Caco-2 (cell line): ENCODE measurements at regions of chr3 and their contacts with region 1.

Region 1: DNA sequence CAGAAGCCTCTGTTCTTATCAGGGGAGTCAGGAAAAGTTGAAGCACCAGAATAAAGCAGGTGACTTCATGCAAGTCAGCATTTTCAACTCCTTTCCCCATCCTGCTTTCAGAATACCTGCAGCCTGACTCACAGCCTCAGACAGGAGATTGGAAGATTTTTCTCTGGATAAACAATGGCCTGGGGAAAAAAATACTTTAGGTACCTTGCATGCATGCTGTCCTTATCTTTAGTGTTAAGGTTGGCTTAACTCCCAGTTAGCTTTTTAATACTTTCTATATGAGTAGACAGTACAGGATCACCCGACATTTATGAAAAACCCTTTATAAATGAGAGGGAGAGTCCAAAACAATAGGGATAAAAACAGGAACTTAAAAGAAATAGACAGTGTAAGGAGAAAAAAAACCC is 53.6 kb downstream of the PAK2 start:
- DNase-seq: peak; percentile 78 to 82
- H3K4me3 ChIP-seq: no peak overlapping the region
- H3K4me3 Mint-ChIP-seq: peak overlapping the region; percentile 49
- H3K27ac Mint-ChIP-seq: peak overlapping the region; percentile 80
- H3K4me1 ChIP-seq: peaks cover 67% of the 10 kb centered on the region
- H3K4me1 Mint-ChIP-seq: peaks cover 37% of the 10 kb centered on the region
- H3K27me3 ChIP-seq: no peaks in the 10 kb centered on the region
- H3K27me3 Mint-ChIP-seq: no peaks in the 10 kb centered on the region
- CTCF ChIP-seq: no peak

Region 2: DNA sequence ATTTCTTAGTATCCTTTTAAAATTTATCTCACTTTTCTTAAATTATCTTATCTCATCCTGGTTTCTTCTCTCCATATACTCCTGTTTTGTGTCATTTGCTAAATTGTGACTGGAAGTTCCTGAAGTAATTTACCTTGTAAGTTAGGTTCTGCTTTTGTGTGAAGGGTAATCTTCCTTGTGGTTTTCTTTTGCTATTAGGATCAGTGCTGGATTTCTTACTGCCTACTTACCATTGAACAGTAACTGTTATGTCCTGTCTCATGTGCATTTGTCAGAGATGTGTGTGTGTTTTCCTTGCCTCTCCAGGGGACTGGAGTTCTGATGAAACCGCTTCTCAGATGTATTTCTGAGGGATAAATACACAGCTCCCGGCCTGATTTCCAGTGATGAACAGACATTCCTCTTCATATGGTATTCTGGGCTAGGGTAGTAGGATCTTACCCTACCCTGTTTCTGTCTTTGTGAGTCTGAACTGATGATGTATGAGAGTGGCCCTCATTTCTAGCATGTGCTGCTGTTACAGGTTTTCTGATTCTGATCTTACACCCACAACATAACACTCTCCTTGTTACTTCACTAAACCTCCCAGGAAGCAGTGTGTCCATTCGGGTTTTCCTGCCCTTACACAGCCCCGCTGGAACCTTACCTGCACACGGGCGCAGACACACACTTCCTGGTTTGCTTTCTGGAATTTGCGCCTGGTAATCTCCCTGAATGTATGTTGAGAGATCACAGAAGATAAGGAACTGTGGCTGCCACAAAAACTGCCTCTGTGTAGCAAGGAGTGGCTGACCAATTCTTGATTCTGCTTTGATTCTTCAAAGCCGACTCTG is 38.9 kb before region 1 on chr3:
- CTCF ChIA-PET with region 1: no interaction called
- POLR2A ChIA-PET with region 1: no interaction called
- intact Hi-C with region 1: loop called (anchors 5 kb)
- DNase-seq: peak; percentile 74 to 78
- H3K4me3 ChIP-seq: peak overlapping the region; percentile 21
- H3K4me3 Mint-ChIP-seq: peak overlapping the region; percentile 68
- H3K27ac Mint-ChIP-seq: peak overlapping the region; percentile 88
- H3K4me1 ChIP-seq: peaks cover 36% of the 10 kb centered on the region
- H3K4me1 Mint-ChIP-seq: peaks cover 25% of the 10 kb centered on the region
- H3K27me3 ChIP-seq: no peaks in the 10 kb centered on the region
- H3K27me3 Mint-ChIP-seq: no peaks in the 10 kb centered on the region
- CTCF ChIP-seq: no peak

Region 3: DNA sequence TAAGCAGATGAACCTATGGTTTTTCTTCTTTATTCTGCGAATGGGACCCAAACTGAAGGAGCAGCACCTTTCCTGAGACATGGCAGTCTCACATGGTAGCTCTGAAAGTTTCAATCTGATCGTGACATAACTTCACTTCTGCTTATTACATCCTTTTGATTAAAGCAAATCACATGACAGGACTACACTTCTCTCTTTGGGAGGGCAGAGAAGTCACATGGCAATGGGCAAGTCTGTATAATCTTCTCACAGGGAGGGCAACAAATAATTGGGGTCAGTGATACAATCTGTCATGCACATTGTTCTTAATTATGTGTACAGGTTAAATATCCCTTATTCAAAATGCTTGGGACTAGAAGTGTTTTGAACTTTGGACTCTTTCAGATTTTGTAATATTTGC is 127.5 kb after region 1 on chr3:
- CTCF ChIA-PET with region 1: no interaction called
- POLR2A ChIA-PET with region 1: no interaction called
- intact Hi-C with region 1: no loop called
- DNase-seq: no peak
- H3K4me3 ChIP-seq: no peak overlapping the region
- H3K4me3 Mint-ChIP-seq: no peak overlapping the region
- H3K27ac Mint-ChIP-seq: no peak overlapping the region
- H3K4me1 ChIP-seq: peaks cover 4% of the 10 kb centered on the region; the same call in 1 of the 2 replicates
- H3K4me1 Mint-ChIP-seq: peaks cover 12% of the 10 kb centered on the region
- H3K27me3 ChIP-seq: no peaks in the 10 kb centered on the region
- H3K27me3 Mint-ChIP-seq: no peaks in the 10 kb centered on the region
- CTCF ChIP-seq: no peak